A673 (cell line): ENCODE measurements at regions of chr5 and their contacts with region 1.

Region 1: GRCh38 chr5:147369742-147370374 is 135.0 kb downstream of the STK32A start:
- DNase-seq: no peak
- H3K4me3 ChIP-seq: no peak overlapping the region
- H3K27ac ChIP-seq: no peak overlapping the region
- H3K4me1 ChIP-seq: no peaks in the 10 kb centered on the region
- H3K27me3 ChIP-seq: peaks cover 15% of the 10 kb centered on the region
- CTCF ChIP-seq: peak; percentile 54

Region 2: DNA sequence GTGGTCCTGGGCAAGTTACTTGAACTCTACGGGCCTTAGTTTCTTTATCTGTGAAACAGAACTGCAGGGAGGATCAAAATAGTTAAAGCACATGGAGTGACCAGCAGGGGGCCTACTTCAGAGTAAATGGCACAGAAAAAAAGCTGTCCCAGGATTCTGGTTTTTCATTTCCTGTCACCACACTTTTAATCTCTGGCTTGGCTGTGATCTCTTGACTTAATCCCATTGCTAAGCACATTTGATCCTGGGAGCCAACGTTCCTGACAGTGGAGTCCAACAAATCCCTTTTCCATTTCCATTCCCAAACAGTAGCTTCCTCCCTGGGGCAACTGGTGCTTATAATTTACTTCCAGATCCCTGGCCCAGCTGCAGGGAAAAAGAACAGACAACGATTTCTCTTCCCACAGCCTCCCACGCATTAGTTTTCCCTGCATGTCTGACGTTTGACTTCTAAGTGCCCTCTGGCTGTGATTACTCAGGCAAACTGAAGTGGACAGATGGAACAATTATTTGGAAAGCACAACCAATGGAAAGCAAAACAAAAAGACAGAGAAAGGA is 271.5 kb before region 1 on chr5:
- CTCF ChIA-PET with region 1: interaction called, 4 read pairs
- POLR2A ChIA-PET with region 1: no interaction called
- intact Hi-C with region 1: loop called (anchors 10 kb)
- DNase-seq: peak; percentile 71
- H3K4me3 ChIP-seq: no peak overlapping the region
- H3K27ac ChIP-seq: no peak overlapping the region
- H3K4me1 ChIP-seq: peaks cover 4% of the 10 kb centered on the region
- H3K27me3 ChIP-seq: peaks cover 8% of the 10 kb centered on the region
- CTCF ChIP-seq: peak; percentile 70

Region 3: GRCh38 chr5:147223948-147224791 is 145.7 kb before region 1 on chr5:
- CTCF ChIA-PET with region 1: no interaction called
- POLR2A ChIA-PET with region 1: no interaction called
- intact Hi-C with region 1: loop called (anchors 5 kb)
- DNase-seq: peak; percentile 52
- H3K4me3 ChIP-seq: no peak overlapping the region
- H3K27ac ChIP-seq: no peak overlapping the region
- H3K4me1 ChIP-seq: no peaks in the 10 kb centered on the region
- H3K27me3 ChIP-seq: peaks cover 34% of the 10 kb centered on the region
- CTCF ChIP-seq: peak; percentile 57

Region 4: GRCh38 chr5:147346006-147346561 is 23.8 kb before region 1 on chr5:
- CTCF ChIA-PET with region 1: no interaction called
- POLR2A ChIA-PET with region 1: no interaction called
- intact Hi-C with region 1: no loop called
- DNase-seq: peak; percentile 14
- H3K4me3 ChIP-seq: no peak overlapping the region
- H3K27ac ChIP-seq: no peak overlapping the region
- H3K4me1 ChIP-seq: no peaks in the 10 kb centered on the region
- H3K27me3 ChIP-seq: peaks cover 27% of the 10 kb centered on the region
- CTCF ChIP-seq: peak; percentile 46

Region 5: DNA sequence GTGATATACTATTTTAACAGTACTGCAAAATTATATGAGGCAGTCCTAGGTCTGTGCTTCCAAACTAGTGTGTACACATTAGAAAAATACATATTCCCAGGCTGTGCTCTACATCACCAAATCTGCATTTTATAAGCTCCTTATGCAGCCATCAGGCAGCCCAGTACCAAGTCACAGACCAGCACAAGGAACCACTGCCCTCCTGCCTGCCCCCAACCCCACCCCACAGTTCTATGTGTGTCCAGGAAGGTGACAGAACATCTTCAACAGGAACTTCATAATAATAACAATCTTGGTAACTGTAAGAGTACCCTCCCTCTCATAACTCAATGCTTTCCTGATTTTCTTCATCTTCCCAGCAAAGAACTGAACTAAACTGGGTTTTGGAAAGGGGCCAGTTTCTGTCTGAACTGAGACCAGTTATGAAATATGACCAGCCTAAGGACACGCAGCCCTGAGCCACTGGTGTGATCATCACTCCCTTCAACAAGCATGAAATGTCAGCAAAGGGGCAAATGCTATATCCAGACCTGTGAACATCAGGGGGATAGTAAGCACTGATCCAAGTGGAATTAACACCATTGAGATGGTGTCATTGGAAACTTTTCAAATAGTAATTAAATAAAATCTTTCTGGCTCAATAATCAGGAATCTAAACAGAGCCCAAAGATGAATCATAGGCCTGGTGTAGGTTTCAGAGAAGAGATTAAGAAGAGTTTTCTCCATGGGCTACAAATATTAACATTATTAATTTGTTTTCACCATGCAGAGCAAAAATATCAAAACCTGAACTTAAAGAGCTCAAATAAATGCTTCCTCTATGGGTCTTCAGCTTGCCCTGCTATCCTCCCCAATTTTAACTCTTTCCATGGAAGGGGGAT is 57.9 kb after region 1 on chr5:
- CTCF ChIA-PET with region 1: no interaction called
- POLR2A ChIA-PET with region 1: no interaction called
- intact Hi-C with region 1: no loop called
- DNase-seq: no peak
- H3K4me3 ChIP-seq: no peak overlapping the region
- H3K27ac ChIP-seq: no peak overlapping the region
- H3K4me1 ChIP-seq: no peaks in the 10 kb centered on the region
- H3K27me3 ChIP-seq: no peaks in the 10 kb centered on the region
- CTCF ChIP-seq: no peak

Region 6: DNA sequence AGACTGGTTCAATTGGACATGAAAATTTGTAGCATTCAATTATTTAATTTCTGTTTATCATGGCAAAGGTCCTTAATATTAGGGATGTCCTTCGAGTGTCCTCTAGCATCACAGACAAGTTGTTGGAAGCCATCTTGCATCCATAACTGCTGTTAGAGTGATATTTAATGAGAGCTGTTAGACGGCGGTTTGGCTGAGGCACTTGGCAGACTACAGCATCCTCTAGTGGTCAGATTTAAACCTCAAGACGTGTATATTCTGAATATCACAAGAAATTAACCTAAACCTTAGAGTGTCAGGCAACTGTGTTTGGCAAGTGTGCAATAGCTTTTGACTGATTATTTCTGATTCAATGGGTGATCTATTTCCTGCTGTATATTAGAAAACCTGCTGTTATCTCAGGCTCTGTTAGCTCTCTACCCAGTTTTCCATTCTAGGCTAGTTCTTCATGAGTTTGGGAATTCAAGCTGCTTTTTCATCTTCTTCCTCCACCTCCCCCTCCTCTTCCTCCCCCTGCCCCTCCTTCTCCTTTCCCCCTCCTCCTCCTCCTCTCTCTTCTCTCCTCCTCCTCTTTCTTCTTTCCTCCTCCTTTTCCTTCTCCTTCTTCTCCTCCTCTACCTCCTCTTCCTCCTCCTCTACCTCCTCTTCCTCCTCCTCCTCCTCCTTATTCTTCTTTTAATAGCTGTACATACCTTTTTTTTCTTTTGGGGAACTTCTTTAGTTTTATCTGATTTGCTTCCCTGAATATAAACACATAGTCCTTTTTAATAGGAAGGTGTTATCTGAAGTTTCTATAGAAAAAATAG is 453.0 kb after region 1 on chr5:
- CTCF ChIA-PET with region 1: interaction called, 22 read pairs
- POLR2A ChIA-PET with region 1: no interaction called
- intact Hi-C with region 1: no loop called
- DNase-seq: peak; percentile 95
- H3K4me3 ChIP-seq: no peak overlapping the region
- H3K27ac ChIP-seq: peak overlapping the region; percentile 55
- H3K4me1 ChIP-seq: peaks cover 53% of the 10 kb centered on the region
- H3K27me3 ChIP-seq: no peaks in the 10 kb centered on the region
- CTCF ChIP-seq: peak; percentile 96